OCI-LY7 (cell line): ENCODE measurements at regions of chr16 and their contacts with region 1.

Region 1: GRCh38 chr16:57084257-57084770 is 8.1 kb upstream of the CPNE2 start:
- DNase-seq: peak; percentile 88
- H3K4me3 ChIP-seq: no peak overlapping the region
- H3K27ac ChIP-seq: peak overlapping the region; percentile 83
- H3K4me1 ChIP-seq: peaks cover 57% of the 10 kb centered on the region
- CTCF ChIP-seq: peak; percentile 98

Region 2: DNA sequence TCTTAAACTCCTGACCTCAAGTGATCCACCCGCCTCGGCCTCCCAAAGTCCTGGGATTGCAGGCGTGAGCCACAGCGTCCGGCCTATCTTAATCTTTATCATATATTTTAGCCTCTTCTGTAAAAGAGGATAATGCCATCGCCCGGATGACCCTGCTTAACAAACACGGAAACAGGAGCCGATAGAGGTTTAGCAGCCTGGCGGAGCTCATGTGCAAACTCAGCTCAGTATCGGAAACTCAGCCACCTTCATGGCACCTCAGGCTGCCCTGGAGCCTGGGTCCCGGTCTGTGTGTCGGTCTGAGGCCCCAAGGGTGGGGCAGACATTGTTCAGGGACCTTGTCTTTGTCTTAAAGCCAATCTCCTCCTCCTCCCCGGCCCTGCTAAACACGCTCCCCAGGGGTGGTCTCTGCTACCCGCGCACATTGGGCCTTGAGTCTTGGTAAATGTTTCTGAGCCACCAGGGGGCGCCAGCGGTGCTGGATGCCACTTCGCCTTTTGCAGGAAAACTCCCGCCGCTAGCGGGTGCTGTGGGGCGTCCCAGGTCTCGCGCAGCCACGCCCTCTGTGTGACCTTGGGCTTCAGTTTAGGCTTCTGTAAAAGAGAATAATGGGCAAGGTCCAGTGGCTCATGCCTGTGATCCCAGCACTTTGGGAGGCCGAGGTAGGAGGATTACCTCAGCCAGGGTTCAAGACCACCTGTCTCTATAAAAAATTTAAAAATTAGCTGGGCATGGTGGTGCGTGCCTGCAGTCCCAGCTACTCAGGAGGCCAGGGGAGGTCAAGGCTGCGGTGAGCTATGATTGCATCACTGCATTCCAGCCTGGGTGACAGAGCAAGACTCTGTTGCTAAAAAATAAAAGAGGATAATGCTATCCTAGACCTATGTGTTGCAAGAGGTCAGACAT is 119.8 kb before region 1 on chr16:
- CTCF ChIA-PET with region 1: no interaction called
- POLR2A ChIA-PET with region 1: interaction called, 3 read pairs
- intact Hi-C with region 1: loop called (anchors 1 kb)
- DNase-seq: peak; percentile 96
- H3K4me3 ChIP-seq: no peak overlapping the region
- H3K27ac ChIP-seq: peak overlapping the region; percentile 16
- H3K4me1 ChIP-seq: peaks cover 21% of the 10 kb centered on the region
- CTCF ChIP-seq: peak; percentile 100

Region 3: DNA sequence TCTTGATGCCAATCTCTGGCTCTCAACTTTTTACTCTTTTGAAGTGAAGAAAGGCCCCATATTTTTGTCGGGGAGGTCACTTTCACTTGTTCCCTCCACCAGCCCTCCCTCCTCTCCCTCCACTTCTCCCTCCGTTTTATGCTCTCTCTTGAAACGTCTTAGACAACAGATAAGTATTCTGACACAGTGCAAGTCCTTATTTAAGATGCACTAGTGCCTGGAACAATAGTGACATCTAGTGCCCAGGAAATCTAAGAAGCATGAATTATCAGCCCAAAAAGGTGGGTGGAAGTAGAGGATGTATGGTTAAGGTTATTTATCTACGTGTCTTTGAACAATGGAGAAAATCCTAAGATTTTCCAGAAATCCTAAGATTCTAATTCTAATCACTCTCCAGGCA is 83.6 kb after region 1 on chr16:
- CTCF ChIA-PET with region 1: no interaction called
- POLR2A ChIA-PET with region 1: no interaction called
- intact Hi-C with region 1: loop called (anchors 1 kb)
- DNase-seq: peak; percentile 84
- H3K4me3 ChIP-seq: no peak overlapping the region
- H3K27ac ChIP-seq: no peak overlapping the region
- H3K4me1 ChIP-seq: peaks cover 10% of the 10 kb centered on the region
- CTCF ChIP-seq: peak; percentile 96

Region 4: DNA sequence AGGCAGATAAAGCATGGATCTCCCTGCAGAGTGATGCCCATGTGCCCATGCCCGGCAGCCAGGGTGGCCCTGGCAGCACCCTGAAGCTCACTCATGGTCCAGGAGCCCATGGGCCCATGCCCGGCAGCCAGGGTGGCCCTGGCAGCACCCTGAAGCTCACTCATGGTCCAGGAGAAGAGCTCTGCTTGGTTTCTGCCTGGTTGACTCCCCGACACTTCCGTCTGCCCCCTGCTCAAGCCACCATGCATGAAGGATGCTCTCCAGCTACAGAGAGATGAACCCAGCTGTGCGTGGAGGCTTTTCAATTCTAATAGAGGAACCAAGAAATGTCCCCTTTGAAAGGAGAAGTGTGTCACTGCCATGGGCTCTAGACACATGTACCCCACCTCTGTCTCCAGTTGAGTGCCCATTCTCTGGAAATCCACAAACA is 329.0 kb after region 1 on chr16:
- CTCF ChIA-PET with region 1: interaction called, 3 read pairs
- POLR2A ChIA-PET with region 1: no interaction called
- intact Hi-C with region 1: loop called (anchors 2 kb)
- DNase-seq: peak; percentile 94
- H3K4me3 ChIP-seq: peak overlapping the region; percentile 0
- H3K27ac ChIP-seq: peak overlapping the region; percentile 69
- H3K4me1 ChIP-seq: peaks cover 31% of the 10 kb centered on the region
- CTCF ChIP-seq: no peak